Common myeloid progenitor, CD34-positive (primary cell): ENCODE measurements at regions of chr17 and their contacts with region 1.

Region 1: DNA sequence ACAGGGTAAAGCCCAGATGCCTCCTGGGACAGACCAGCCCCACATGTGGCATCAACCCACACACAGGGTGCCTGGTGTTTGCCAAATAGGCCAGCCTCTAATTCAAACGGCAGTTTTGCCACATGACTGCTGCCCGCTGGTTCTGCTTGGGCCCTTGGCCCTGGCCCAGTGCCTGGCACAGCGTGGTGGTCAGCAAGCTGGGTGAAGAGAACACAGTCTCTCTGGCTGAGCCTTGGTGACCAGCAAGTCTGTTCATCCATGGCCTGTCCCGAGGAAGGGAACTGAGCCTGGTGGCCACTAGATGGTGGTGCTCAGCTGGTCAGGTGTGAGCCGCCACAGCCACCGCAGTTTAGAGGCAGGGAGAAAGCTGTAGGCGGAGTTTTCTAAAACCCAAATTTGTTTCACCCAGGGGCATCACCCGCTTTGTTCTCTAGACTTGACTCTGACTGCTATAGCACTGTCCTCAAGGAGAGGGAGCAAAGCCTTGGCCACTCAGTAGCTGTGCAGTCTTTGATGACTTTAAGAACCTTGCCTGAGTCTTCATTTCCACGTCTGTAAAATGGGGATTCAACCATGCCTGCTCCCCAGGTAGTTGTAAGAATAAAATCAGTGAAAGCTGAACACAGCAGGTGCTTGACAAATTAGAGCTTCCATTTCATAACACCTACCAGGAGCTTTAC is 4.7 kb upstream of the GFAP start:
- DNase-seq: peak; percentile 71 to 86 (median 81)
- H3K4me3 ChIP-seq: no peak overlapping the region
- H3K27ac ChIP-seq: no peak overlapping the region
- H3K4me1 ChIP-seq: no peaks in the 10 kb centered on the region
- H3K27me3 ChIP-seq: peaks cover 0 to 27% (median 10%) of the 10 kb centered on the region in 5 experiments

Region 2: DNA sequence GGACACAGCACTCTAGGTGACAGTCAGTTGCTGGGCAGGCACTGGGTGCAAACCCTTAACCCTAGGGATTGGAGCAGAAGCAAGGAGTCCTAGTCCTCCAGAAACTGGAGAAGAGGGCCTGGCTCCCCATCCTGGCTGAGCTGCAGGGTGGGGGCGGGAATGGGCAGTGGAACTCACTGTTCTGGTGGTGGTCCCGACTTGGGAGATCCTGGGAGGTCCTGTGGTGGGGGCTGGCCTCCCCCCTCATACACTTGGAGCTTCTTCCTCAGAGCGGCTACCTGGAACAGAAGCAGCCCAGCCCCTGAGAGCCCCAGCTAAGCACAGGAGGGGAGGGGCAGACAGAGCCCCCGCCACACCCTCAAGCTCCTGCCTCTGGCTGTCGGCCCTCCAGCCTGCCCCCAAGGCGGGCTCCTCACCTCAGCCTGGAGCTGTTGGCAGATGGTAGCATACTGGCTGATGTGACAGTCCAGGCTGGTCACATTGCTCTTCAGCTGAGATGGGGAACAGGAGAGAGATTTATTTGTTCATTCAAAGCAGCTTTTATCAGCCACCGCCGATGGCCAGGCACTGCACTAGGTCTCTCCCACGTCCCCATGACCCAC is 12.6 kb after region 1 on chr17:
- CTCF ChIA-PET with region 1: interaction called, 17 read pairs
- POLR2A ChIA-PET with region 1: no interaction called
- DNase-seq: no peak
- H3K4me3 ChIP-seq: no peak overlapping the region
- H3K27ac ChIP-seq: no peak overlapping the region
- H3K4me1 ChIP-seq: no peaks in the 10 kb centered on the region
- H3K27me3 ChIP-seq: no peaks in the 10 kb centered on the region

Region 3: DNA sequence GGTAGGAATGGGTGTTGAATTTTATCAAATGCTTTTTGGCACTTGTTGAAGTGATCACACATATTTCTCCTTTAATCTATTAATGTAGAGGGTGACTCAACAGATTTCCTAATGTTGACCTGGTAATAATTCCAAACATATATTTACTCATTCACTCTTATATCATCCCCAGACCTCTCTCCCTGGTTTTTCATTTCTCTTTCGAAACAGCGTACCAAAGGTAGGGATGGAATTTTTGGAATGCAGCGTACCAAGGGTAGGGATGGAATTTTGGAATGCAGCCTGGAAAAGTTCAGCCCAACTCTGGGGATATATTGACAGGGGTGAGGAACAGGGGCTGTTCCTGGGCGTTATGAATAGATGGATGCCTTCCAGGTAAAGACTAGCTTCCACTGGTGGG is 20.3 kb after region 1 on chr17:
- CTCF ChIA-PET with region 1: interaction called, 10 read pairs
- POLR2A ChIA-PET with region 1: no interaction called
- DNase-seq: no peak
- H3K4me3 ChIP-seq: no peak overlapping the region
- H3K27ac ChIP-seq: no peak overlapping the region
- H3K4me1 ChIP-seq: no peaks in the 10 kb centered on the region
- H3K27me3 ChIP-seq: no peaks in the 10 kb centered on the region

Region 4: GRCh38 chr17:44970136-44970737 is 50.2 kb after region 1 on chr17:
- CTCF ChIA-PET with region 1: interaction called, 10 read pairs
- POLR2A ChIA-PET with region 1: no interaction called
- DNase-seq: peak in 2 of 3 donors; percentile 42 to 45
- H3K4me3 ChIP-seq: peak overlapping the region; percentile 22 to 73 (median 50)
- H3K27ac ChIP-seq: no peak overlapping the region
- H3K4me1 ChIP-seq: peaks cover 0 to 31% (median 23%) of the 10 kb centered on the region in 4 experiments
- H3K27me3 ChIP-seq: peaks cover 5 to 87% (median 45%) of the 10 kb centered on the region in 5 experiments

Region 5: DNA sequence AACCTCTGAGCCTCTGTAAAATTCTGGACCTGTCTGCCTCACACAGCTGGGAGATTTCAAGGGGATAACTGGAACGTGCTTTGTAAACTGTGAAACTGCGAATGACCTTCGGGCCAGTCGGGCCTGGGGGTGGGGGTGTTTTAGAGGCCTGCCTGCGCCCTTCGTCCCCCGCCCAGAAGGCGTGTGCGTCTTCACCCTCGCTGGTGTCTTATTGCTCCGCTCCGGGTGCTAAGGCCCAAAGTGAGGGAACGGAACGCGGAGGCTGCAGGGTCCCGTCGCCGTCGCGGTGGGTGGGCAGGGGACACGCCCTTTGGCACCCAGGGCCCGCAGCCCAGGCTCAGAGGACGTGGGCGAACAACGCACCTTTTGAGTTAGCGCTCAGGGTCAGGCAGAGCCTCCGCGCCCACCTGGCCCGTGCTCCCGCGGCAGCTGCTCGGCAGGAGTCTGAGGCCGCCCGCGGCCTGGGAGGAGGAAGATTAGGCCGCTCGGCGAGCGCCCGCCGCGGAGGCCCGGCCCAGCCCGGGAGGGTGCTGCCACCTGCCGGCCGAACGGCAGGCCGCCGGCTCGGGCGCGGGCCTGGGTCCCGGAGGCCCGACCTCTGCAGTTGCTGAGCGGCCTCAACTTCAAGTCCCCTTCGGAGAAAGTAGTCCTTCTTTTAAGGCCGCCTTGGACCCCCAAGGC is 101.7 kb after region 1 on chr17:
- CTCF ChIA-PET with region 1: interaction called, 162 read pairs
- POLR2A ChIA-PET with region 1: interaction called, 5 read pairs
- DNase-seq: peak; percentile 56 to 75 (median 74)
- H3K4me3 ChIP-seq: peak overlapping the region in 5 of 7 experiments; percentile 19 to 73 (median 60)
- H3K27ac ChIP-seq: no peak overlapping the region
- H3K4me1 ChIP-seq: peaks cover 0 to 26% (median 17%) of the 10 kb centered on the region in 4 experiments
- H3K27me3 ChIP-seq: peaks cover 5 to 43% (median 27%) of the 10 kb centered on the region in 5 experiments

Region 6: GRCh38 chr17:45098869-45099616 is 179.0 kb after region 1 on chr17:
- CTCF ChIA-PET with region 1: interaction called, 26 read pairs
- POLR2A ChIA-PET with region 1: no interaction called
- DNase-seq: peak; percentile 54 to 76 (median 71)
- H3K4me3 ChIP-seq: no peak overlapping the region
- H3K27ac ChIP-seq: no peak overlapping the region
- H3K4me1 ChIP-seq: no peaks in the 10 kb centered on the region
- H3K27me3 ChIP-seq: no peaks in the 10 kb centered on the region